ENCODE measurements at regions of chr17 and their contacts with region 1.

Region 1: GRCh38 chr17:3004133-3004801 is 59.1 kb downstream of the OR1D5 start:
- DNase-seq: peak; percentile 98 to 99
- ATAC-seq: peak; percentile 91 to 97 (median 95)
- H3K4me3 ChIP-seq: peak overlapping the region in 9 of 10 donors; percentile 14 to 36 (median 28)
- H3K27ac ChIP-seq: peak overlapping the region; percentile 86 to 93 (median 89)
- H3K4me1 ChIP-seq: peaks cover 16 to 47% (median 39%) of the 10 kb centered on the region in 9 donors
- H3K27me3 ChIP-seq: no peaks in the 10 kb centered on the region
- CTCF ChIP-seq: no peak

Region 2: DNA sequence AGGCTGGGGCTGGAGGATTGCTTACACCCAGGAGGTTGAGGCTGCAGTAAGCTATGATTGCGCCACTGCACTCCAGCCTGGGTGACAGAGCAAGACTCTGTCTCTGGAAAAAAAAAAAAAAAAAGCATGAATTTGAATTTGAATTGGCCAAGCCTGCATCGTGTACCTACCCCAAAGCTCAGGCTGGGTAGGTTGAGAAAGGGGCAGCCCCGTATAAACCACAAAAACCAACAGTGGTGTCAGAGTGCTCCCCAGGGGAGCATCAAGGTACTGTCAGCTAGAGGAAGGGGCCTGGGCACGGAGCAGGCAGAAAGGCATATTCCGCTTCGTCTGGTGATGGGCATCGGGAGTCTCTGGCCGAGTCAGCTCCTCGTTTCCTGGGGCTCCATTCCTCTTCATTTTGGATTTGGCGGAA is 167.1 kb before region 1 on chr17:
- intact Hi-C with region 1: loop called in 1 of 10 experiments (anchors 5 kb)
- DNase-seq: no peak
- ATAC-seq: peak in 1 of 8 donors; percentile 9
- H3K4me3 ChIP-seq: no peak overlapping the region
- H3K27ac ChIP-seq: no peak overlapping the region
- H3K4me1 ChIP-seq: no peaks in the 10 kb centered on the region
- H3K27me3 ChIP-seq: no peaks in the 10 kb centered on the region
- CTCF ChIP-seq: no peak

Region 3: GRCh38 chr17:2860045-2860444 is 144.2 kb before region 1 on chr17:
- intact Hi-C with region 1: no loop called
- DNase-seq: no peak
- ATAC-seq: no peak
- H3K4me3 ChIP-seq: no peak overlapping the region
- H3K27ac ChIP-seq: no peak overlapping the region
- H3K4me1 ChIP-seq: peaks cover 0 to 41% (median 5%) of the 10 kb centered on the region in 9 donors
- H3K27me3 ChIP-seq: peaks cover 0 to 18% (median under 1%) of the 10 kb centered on the region in 7 donors
- CTCF ChIP-seq: no peak

Region 4: DNA sequence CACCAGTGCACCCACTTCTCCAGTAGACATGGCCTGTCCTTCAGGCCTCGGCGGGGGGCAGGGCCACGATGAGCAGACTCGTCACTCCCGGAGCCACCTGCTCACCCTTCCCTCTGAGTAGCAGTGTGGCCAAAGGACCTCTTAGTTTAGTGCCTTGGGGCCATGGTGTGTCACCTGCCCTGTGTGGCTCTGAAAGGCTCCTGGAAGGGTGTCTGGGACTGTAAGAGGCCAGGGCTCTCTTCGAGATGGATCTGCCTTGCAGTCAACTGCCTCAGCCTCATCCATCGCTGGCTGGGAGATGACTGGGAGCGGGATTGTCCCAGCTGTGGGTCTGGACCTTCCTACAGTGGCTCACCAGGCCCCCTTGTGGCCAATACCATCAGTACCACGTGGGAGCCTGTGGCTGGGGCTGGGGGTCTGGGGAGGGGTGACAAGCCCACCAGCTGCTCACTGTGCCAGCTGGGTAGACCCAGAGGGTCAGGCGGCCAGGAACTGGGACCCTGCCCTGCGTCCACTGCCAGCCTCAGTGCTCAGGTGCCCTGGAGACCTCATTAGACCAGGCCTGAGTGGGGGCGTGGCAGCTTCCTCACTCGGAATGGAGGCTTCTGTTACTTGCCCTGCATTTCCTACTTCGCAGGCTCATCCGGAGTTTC is 74.3 kb before region 1 on chr17:
- intact Hi-C with region 1: loop called in 1 of 10 experiments (anchors 10 kb)
- DNase-seq: peak in 1 of 2 donors; percentile 40
- ATAC-seq: peak in 7 of 8 donors; percentile 41 to 78 (median 70)
- H3K4me3 ChIP-seq: no peak overlapping the region
- H3K27ac ChIP-seq: no peak overlapping the region
- H3K4me1 ChIP-seq: no peaks in the 10 kb centered on the region
- H3K27me3 ChIP-seq: no peaks in the 10 kb centered on the region
- CTCF ChIP-seq: peak; percentile 41 to 82 (median 65)

Measured in heart right ventricle (tissue), 16 donors.